ENCODE measurements at regions of chr5 and their contacts with region 1.

Region 1: DNA sequence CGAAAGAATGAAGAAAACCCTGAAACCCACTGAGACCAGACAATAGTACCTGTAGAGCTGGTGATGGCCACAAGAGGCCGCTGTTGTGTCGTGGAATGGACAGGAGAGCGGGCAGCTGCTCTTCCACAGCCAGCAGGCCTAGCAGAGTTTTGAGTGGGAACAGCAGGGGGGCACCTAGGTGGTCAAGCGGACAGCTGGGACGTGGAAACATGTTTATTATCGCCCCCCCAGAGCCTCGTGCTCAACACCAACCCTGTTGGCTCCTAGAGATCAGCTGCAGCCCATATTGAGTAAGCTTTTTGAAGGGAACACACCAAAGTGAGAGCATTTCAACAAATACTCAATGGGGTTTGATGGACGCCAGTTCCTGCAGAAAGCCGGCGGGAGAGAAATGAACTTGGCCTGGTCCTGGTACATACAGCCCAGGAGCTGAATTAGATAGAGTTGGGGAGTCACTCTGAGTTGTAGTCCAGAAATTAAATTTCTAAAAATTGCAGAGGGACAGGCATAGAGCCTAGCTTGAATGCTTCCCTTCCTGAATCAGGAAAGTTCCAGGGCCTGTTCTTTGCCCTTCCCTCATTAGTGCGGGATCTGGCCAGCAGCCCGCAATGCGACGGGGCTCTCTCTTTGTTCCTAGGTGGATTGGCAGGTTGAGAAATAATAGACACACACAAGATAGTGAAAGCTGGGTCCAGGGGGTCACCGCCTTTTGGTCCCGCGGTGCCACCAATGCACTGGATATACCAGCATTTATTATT is 33.8 kb downstream of the MFAP3 start:
- DNase-seq: peak; percentile 90
- H3K4me3 Mint-ChIP-seq: no peak overlapping the region
- H3K27ac Mint-ChIP-seq: peak overlapping the region; percentile 27
- H3K4me1 Mint-ChIP-seq: peaks cover 56% of the 10 kb centered on the region
- H3K27me3 Mint-ChIP-seq: no peaks in the 10 kb centered on the region

Region 2: GRCh38 chr5:154038707-154039457 is 33.7 kb before region 1 on chr5 and contains the starts of genes FAM114A2 and MFAP3:
- CTCF ChIA-PET with region 1: interaction called, 38 read pairs
- POLR2A ChIA-PET with region 1: interaction called, 36 read pairs
- DNase-seq: peak; percentile 92
- H3K4me3 Mint-ChIP-seq: peak within 1 kb of the TSS; percentile 99
- H3K27ac Mint-ChIP-seq: peak within 1 kb of the TSS; percentile 96
- H3K4me1 Mint-ChIP-seq: peaks cover 49% of the 10 kb centered on the region
- H3K27me3 Mint-ChIP-seq: no peaks in the 10 kb centered on the region
- total RNA-seq, gene FAM114A2: 27.0 to 28.5 TPM
- total RNA-seq, gene MFAP3: 23.5 to 25.5 TPM

Region 3: DNA sequence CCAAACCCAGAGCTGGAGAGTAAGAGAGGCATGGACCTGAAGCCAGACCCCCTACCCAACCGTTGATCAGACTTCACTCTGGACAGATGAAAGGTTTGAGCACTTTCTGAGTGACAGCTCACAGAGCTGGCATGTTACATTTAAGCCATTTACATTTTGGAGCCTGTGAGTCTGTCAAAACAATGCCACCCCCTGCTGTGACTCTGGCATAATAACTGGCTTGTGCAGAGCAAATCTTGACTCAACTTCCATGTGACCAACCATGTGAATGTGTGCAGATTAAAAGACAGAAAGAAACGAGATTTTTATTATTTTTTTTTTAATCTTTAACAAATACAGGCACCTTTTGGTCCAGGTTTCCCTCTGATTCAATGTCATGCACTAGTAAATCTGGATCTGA is 14.7 kb after region 1 on chr5:
- CTCF ChIA-PET with region 1: interaction called, 26 read pairs
- POLR2A ChIA-PET with region 1: interaction called, 3 read pairs
- DNase-seq: no peak
- H3K4me3 Mint-ChIP-seq: no peak overlapping the region
- H3K27ac Mint-ChIP-seq: no peak overlapping the region
- H3K4me1 Mint-ChIP-seq: peaks cover 4% of the 10 kb centered on the region
- H3K27me3 Mint-ChIP-seq: peaks cover 11% of the 10 kb centered on the region

Region 4: DNA sequence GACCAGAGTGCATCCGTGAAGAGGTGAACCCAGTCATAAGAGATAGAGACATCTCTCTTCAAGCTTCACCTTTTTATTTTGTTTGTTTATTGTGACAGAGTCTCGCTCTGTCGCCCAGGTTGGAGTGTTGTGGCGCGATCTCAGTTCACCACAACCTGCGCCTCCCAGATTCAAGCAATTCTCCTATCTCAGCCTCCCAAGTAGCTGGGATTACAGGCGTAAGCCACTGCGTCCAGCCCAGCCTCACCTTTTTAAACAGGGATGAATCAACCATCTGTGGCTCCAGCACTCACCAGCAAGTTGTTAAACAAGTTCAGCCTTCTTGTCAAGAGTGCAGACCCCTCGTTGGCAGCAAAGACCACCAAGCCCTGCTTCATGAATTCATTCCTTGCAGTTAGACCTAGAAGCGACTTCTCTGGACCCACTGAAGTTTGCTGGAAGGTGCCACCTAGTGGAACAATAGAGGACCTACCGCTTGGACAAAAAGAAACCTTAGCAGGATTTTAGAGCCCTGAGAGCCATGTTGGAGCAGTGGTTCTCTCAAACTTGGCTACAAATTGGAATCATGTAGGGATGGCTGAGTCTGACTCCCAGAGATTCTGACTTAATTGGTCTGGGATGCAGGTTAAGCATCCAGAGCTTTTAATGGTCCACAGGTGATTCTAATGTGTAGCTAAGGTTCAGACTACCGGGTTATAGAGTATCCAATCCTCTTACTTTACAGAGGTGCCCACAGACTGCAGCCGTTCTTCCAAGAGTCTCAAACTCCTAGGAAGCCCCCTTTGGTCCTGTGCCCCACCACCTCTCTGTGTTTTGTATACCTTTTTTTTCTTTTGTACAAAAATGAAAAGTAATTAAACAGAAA is 107.5 kb after region 1 on chr5:
- CTCF ChIA-PET with region 1: interaction called, 190 read pairs
- POLR2A ChIA-PET with region 1: interaction called, 5 read pairs
- DNase-seq: peak; percentile 42
- H3K4me3 Mint-ChIP-seq: no peak overlapping the region
- H3K27ac Mint-ChIP-seq: no peak overlapping the region
- H3K4me1 Mint-ChIP-seq: peaks cover 21% of the 10 kb centered on the region
- H3K27me3 Mint-ChIP-seq: peaks cover 16% of the 10 kb centered on the region

Region 5: GRCh38 chr5:154238776-154239481 is 166.3 kb after region 1 on chr5:
- CTCF ChIA-PET with region 1: interaction called, 37 read pairs
- POLR2A ChIA-PET with region 1: no interaction called
- DNase-seq: no peak
- H3K4me3 Mint-ChIP-seq: no peak overlapping the region
- H3K27ac Mint-ChIP-seq: no peak overlapping the region
- H3K4me1 Mint-ChIP-seq: peaks cover 26% of the 10 kb centered on the region
- H3K27me3 Mint-ChIP-seq: no peaks in the 10 kb centered on the region

Region 6: GRCh38 chr5:154467655-154468354 is 395.2 kb after region 1 on chr5:
- CTCF ChIA-PET with region 1: interaction called, 16 read pairs
- POLR2A ChIA-PET with region 1: no interaction called
- DNase-seq: peak; percentile 77
- H3K4me3 Mint-ChIP-seq: no peak overlapping the region
- H3K27ac Mint-ChIP-seq: no peak overlapping the region
- H3K4me1 Mint-ChIP-seq: no peaks in the 10 kb centered on the region
- H3K27me3 Mint-ChIP-seq: peaks cover 35% of the 10 kb centered on the region

Measured in activated CD4-positive, alpha-beta memory T cell treated with anti-CD3 and anti-CD28 coated beads, Interleukin-2, amount 10 ng/mL, durations not matched to agents 7 days and 5 days (primary cell).